CD4-positive, alpha-beta T cell (primary cell): ENCODE measurements at regions of chr3 and their contacts with region 1.

Region 1: GRCh38 chr3:125055913-125056745 is at the start of gene HEG1:
- DNase-seq: peak; percentile 48 to 88 (median 73)
- ATAC-seq: peak; percentile 55
- H3K4me3 ChIP-seq: peak within 1 kb of the TSS; percentile 74
- H3K4me3 Mint-ChIP-seq: peak within 1 kb of the TSS; percentile 96
- H3K27ac ChIP-seq: peak within 1 kb of the TSS; percentile 74 to 86
- H3K27ac Mint-ChIP-seq: peak within 1 kb of the TSS; percentile 90
- H3K4me1 ChIP-seq: peaks cover 40% of the 10 kb centered on the region
- H3K4me1 Mint-ChIP-seq: peaks cover 45% of the 10 kb centered on the region
- H3K27me3 ChIP-seq: no peaks in the 10 kb centered on the region
- H3K27me3 Mint-ChIP-seq: peaks cover 5% of the 10 kb centered on the region
- CTCF ChIP-seq: no peak
- total RNA-seq, gene HEG1: 31.2 to 32.6 TPM

Region 2: GRCh38 chr3:124730129-124730940 is 325.8 kb before region 1 on chr3 and contains the start of gene UMPS:
- CTCF ChIA-PET with region 1: no interaction called
- POLR2A ChIA-PET with region 1: no interaction called
- intact Hi-C with region 1: loop called in 1 of 2 experiments (anchors 5 kb)
- DNase-seq: peak; percentile 83 to 95 (median 91)
- ATAC-seq: peak; percentile 97
- H3K4me3 ChIP-seq: peak within 1 kb of the TSS; percentile 78
- H3K4me3 Mint-ChIP-seq: peak within 1 kb of the TSS; percentile 98
- H3K27ac ChIP-seq: peak within 1 kb of the TSS; percentile 54 to 76
- H3K27ac Mint-ChIP-seq: peak within 1 kb of the TSS; percentile 94
- H3K4me1 ChIP-seq: peaks cover 21% of the 10 kb centered on the region
- H3K4me1 Mint-ChIP-seq: peaks cover 44% of the 10 kb centered on the region
- H3K27me3 ChIP-seq: peaks cover 5 to 11% of the 10 kb centered on the region in 2 experiments
- H3K27me3 Mint-ChIP-seq: peaks cover 17% of the 10 kb centered on the region
- CTCF ChIP-seq: no peak
- total RNA-seq, gene UMPS: 19.5 to 19.7 TPM

Region 3: DNA sequence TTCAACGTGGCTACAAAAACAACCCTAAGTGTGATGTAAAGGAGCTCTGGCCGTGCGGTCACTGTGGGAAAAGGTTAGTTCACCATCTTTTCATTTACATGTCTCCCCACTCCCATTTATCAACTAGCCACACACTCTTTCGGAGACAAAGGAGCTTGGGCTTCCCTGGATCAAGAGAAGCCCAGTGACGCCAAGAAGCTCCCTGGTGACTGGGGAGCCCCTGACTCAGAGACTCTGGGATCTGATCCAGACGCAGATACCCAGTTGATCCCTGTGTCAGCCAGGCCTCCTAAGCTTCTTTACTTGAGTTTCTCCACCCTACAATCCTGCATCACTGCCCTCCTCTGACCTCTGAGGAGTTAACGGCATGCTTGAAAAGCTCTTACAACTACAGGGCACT is 44.2 kb before region 1 on chr3:
- CTCF ChIA-PET with region 1: no interaction called
- POLR2A ChIA-PET with region 1: interaction called, 4 read pairs
- intact Hi-C with region 1: loop called in 1 of 2 experiments (anchors 5 kb)
- DNase-seq: no peak
- ATAC-seq: no peak
- H3K4me3 ChIP-seq: no peak overlapping the region
- H3K4me3 Mint-ChIP-seq: no peak overlapping the region
- H3K27ac ChIP-seq: no peak overlapping the region
- H3K27ac Mint-ChIP-seq: peak overlapping the region; percentile 0
- H3K4me1 ChIP-seq: peaks cover 14% of the 10 kb centered on the region
- H3K4me1 Mint-ChIP-seq: peaks cover 36% of the 10 kb centered on the region
- H3K27me3 ChIP-seq: no peaks in the 10 kb centered on the region
- H3K27me3 Mint-ChIP-seq: no peaks in the 10 kb centered on the region
- CTCF ChIP-seq: no peak

Region 4: DNA sequence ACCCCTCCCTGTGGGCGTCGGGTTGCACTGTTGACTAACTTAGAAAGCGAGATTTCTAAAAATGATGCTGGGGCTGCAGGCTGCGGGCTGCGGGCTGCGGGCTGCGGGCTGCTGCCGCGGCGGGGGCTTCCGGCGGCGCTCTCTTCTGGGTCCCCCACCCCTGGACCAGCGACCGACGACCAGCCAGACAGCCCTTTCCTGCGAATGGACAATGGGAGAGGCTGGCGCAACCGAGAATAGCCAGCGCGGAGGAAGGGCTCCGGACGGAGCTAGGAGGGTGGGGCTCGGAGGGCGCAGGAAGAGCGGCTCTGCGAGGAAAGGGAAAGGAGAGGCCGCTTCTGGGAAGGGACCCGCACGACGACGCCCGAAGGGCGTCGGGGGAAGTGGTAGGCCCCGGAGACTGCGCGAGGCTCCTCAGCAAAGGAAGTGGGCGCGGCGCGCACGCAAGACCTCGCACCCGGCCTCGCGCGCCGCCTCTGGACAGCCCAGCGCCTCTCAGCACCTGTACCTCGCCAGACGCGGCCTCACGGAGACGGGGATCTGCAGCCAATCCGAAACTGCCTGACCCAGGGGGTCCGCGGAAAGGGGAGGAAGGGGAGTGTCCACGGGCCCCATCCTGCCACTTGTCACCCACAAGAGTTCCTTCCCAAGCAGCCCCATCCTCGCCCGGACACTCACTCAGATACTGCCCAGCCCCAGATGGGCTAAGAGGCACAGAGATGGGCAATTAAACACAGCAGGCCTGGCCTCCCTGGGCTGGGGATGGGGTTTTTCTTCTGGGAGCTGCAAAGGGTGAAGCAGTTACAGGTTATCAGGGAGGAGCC is 85.7 kb after region 1 on chr3:
- CTCF ChIA-PET with region 1: no interaction called
- POLR2A ChIA-PET with region 1: interaction called, 14 read pairs
- intact Hi-C with region 1: loop called (anchors 2 to 5 kb)
- DNase-seq: peak; percentile 27 to 85 (median 67)
- ATAC-seq: peak; percentile 89
- H3K4me3 ChIP-seq: peak overlapping the region; percentile 53
- H3K4me3 Mint-ChIP-seq: peak overlapping the region; percentile 80
- H3K27ac ChIP-seq: no peak overlapping the region
- H3K27ac Mint-ChIP-seq: peak overlapping the region; percentile 16
- H3K4me1 ChIP-seq: peaks cover 40% of the 10 kb centered on the region
- H3K4me1 Mint-ChIP-seq: peaks cover 37% of the 10 kb centered on the region
- H3K27me3 ChIP-seq: no peaks in the 10 kb centered on the region
- H3K27me3 Mint-ChIP-seq: no peaks in the 10 kb centered on the region
- CTCF ChIP-seq: peak; percentile 40

Region 5: DNA sequence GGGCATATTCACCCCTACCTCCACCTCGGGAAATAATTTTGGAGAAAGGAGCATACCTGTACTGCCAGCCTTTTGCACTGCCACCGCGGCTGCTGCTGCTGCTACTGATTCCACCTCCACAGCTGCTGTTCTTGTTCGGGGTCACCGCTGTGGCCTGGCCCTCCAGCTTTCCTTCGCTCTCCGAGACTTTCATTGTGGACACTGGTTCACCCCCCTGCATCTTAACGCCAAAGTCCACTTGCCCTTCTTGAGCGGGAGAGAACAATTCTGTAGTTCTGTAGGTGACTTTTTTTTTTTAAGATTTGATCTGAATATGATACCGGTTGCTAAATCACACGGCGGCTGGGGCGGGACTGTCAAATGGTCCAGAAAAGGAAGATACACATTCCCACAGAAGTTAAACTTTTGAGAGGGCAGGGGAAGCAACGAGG is 538.5 kb after region 1 on chr3:
- CTCF ChIA-PET with region 1: no interaction called
- POLR2A ChIA-PET with region 1: no interaction called
- intact Hi-C with region 1: loop called in 1 of 2 experiments (anchors 5 kb)
- DNase-seq: no peak
- ATAC-seq: no peak
- H3K4me3 ChIP-seq: peak overlapping the region; percentile 92
- H3K4me3 Mint-ChIP-seq: peak overlapping the region; percentile 97
- H3K27ac ChIP-seq: peak overlapping the region; percentile 70 to 80
- H3K27ac Mint-ChIP-seq: peak overlapping the region; percentile 84
- H3K4me1 ChIP-seq: peaks cover 45% of the 10 kb centered on the region
- H3K4me1 Mint-ChIP-seq: peaks cover 46% of the 10 kb centered on the region
- H3K27me3 ChIP-seq: no peaks in the 10 kb centered on the region
- H3K27me3 Mint-ChIP-seq: no peaks in the 10 kb centered on the region
- CTCF ChIP-seq: no peak